Pancreas (tissue), 10 donors: ENCODE measurements at regions of chr11 and their contacts with region 1.

Region 1: DNA sequence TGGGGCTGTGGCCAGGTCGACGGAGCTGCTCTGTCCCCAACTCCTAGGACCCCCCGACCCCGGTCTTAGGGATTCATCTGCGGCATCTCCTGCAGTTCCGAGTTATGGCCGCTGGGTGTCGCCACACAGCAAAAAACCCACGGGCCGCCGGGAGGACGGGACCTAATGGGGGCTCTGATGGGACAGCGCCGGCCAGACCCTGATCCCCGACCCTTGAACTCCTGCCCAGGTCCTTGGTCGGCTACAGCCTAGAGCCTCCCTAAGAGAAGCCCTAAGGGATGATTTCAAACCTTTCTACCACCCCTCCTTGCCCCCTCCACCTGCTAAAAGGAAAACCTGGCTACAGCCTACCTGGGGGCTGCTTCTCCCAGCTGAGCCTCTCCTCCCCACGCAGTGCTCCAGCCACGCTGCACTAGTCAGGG is 30.8 kb upstream of the LRRC10B start:
- DNase-seq: peak in 5 of 6 donors; percentile 32 to 82 (median 51)
- ATAC-seq: peak; percentile 51 to 77 (median 58)
- H3K4me3 ChIP-seq: no peak overlapping the region
- H3K27ac ChIP-seq: no peak overlapping the region
- H3K4me1 ChIP-seq: no peaks in the 10 kb centered on the region
- H3K27me3 ChIP-seq: peaks cover 0 to 3% (median 0%) of the 10 kb centered on the region in 4 donors
- CTCF ChIP-seq: peak; percentile 82 to 92 (median 88)

Region 2: DNA sequence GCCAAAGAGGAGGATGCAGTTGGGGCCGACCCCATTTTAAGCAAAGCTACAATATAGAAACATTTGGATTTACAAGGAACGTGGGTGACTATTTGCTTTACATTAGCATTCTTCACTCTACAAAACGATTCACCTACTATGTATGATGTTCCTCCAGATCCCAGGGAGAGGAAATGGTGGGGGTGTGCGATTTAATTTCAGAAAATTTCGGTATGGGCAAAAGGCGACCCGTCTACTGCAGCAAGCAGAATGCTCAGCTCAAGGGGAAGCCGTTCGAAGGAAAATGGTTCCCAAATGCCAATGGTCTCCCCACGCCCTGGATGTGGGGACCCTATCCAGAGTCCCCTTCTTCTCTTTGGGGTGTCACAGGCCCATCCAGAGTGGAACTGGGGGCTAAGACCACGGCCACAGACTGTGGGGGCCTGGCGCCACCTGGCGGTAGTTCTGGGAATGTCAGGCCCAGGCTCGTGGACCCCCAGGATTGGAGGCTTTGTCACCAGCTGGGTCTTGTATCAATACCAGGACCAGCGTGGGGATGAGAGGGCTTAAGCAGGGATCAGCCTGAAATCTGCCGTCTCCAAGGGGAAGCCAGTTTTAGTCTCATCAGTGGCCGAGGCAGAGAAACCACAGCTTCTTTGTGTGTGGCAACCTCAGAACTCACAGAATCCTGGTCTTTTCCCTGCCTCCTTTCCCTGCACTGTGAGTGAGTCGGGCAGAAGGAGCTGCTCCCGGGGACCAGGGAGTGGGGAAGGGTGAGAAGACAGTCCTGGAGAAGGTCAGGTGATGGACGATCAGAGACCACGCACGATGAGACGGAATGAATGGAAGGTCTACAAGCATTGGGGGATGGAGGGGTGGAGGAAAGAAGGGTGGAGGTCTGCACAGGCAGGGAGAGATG is 39.2 kb after region 1 on chr11:
- intact Hi-C with region 1: loop called in 2 of 3 experiments (anchors 5 kb)
- DNase-seq: peak in 3 of 6 donors; percentile 39 to 77 (median 43)
- ATAC-seq: peak in 3 of 4 donors; percentile 43 to 75 (median 58)
- H3K4me3 ChIP-seq: no peak overlapping the region
- H3K27ac ChIP-seq: no peak overlapping the region
- H3K4me1 ChIP-seq: no peaks in the 10 kb centered on the region
- H3K27me3 ChIP-seq: no peaks in the 10 kb centered on the region
- CTCF ChIP-seq: peak; percentile 82 to 96 (median 94)

Region 3: GRCh38 chr11:61632096-61632495 is 154.4 kb after region 1 on chr11:
- intact Hi-C with region 1: loop called in 2 of 3 experiments (anchors 5 to 10 kb)
- DNase-seq: no peak
- ATAC-seq: no peak
- H3K4me3 ChIP-seq: no peak overlapping the region
- H3K27ac ChIP-seq: no peak overlapping the region
- H3K4me1 ChIP-seq: peaks cover 6 to 8% (median 6%) of the 10 kb centered on the region in 3 donors
- H3K27me3 ChIP-seq: no peaks in the 10 kb centered on the region
- CTCF ChIP-seq: no peak

Region 4: GRCh38 chr11:61639816-61640443 is 162.2 kb after region 1 on chr11:
- intact Hi-C with region 1: loop called in 1 of 3 experiments (anchors 10 kb)
- DNase-seq: no peak
- ATAC-seq: no peak
- H3K4me3 ChIP-seq: no peak overlapping the region
- H3K27ac ChIP-seq: no peak overlapping the region
- H3K4me1 ChIP-seq: no peaks in the 10 kb centered on the region
- H3K27me3 ChIP-seq: no peaks in the 10 kb centered on the region
- CTCF ChIP-seq: no peak

Region 5: GRCh38 chr11:61711498-61711897 is 233.8 kb after region 1 on chr11:
- intact Hi-C with region 1: no loop called
- DNase-seq: no peak
- ATAC-seq: peak in 2 of 4 donors; percentile 38 to 40
- H3K4me3 ChIP-seq: no peak overlapping the region
- H3K27ac ChIP-seq: no peak overlapping the region
- H3K4me1 ChIP-seq: no peaks in the 10 kb centered on the region
- H3K27me3 ChIP-seq: no peaks in the 10 kb centered on the region
- CTCF ChIP-seq: no peak